Colonic mucosa (tissue), 4 donors: ENCODE measurements at regions of chr3 and their contacts with region 1.

Region 1: DNA sequence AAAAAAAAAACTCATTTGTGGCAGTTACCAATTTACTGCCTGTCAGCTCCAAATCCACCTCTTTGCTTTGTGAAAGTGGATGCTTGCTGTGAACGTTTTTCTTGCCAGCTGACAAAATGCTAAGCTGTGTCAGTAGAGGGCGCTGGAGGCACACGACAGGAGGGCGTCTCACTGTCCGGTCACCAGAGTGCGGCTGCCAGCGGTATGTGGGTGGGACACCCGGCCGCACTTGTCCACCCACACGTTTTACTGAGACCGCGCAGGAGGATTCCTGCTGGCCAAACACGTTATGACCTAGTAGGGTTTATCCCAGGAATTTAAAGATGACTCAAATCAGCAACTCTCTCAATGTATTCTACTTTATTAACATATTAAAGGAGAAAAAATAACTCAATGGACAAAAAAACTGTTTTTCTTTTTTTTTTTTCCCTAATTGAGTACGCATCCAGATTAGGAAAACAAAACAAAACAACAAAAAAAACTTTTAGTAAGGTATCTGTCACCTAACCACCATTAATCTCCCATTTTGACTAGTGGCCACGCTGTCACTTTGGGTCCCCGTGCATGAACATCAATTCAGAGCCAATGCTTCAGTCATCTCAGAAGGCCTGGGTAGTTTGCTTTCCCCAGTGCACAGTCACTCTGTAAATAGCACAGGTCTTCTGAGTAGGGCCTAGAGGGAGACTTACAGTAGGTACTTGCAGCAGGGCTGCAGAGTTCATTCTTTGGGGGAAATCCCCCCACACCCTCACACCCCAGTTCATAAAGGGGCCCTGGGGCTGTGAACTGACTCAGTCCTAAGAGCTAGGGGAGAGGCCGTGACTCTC is 43.8 kb upstream of the RPL35A start:
- DNase-seq: peak; percentile 80
- H3K4me3 ChIP-seq: no peak overlapping the region
- H3K27ac ChIP-seq: no peak overlapping the region
- H3K4me1 ChIP-seq: peaks cover 6% of the 10 kb centered on the region
- H3K27me3 ChIP-seq: no peaks in the 10 kb centered on the region
- CTCF ChIP-seq: peak; percentile 77

Region 2: DNA sequence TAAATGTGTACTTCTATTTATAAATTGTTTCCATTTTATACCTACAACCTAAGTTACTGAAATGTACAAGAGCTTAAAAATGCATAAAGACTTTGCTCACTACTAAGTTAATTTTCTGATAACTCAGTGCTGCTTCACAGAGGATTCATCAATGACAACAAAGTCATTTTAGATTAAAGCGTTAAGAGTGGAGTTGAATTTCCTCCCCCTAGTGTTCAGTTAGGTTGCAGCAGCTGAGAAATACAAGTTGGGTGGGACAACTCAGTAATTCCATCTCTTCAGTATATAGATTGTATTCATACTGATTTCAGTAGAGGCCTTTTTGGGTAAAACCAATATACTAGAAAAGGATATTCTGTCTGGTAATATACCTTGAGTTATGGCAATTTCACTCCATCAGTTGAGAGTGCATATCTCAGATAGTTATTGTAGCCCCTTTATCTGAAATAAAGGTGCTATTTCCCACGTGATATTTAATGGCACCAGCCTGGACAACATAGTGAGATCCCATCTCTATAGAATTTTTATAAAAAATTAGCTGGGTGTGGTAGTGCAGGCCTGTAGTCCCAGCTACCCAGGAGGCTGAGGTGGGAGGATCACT is 36.8 kb after region 1 on chr3:
- intact Hi-C with region 1: loop called (anchors 2 kb)
- DNase-seq: no peak
- H3K4me3 ChIP-seq: no peak overlapping the region
- H3K27ac ChIP-seq: no peak overlapping the region
- H3K4me1 ChIP-seq: no peaks in the 10 kb centered on the region
- H3K27me3 ChIP-seq: no peaks in the 10 kb centered on the region
- CTCF ChIP-seq: peak; percentile 57

Region 3: GRCh38 chr3:197989651-197990050 is 83.4 kb after region 1 on chr3:
- intact Hi-C with region 1: no loop called
- DNase-seq: no peak
- H3K4me3 ChIP-seq: no peak overlapping the region
- H3K27ac ChIP-seq: no peak overlapping the region
- H3K4me1 ChIP-seq: no peaks in the 10 kb centered on the region
- H3K27me3 ChIP-seq: no peaks in the 10 kb centered on the region
- CTCF ChIP-seq: no peak